Left cardiac atrium (tissue), 4 donors: ENCODE measurements at regions of chr15 and their contacts with region 1.

Region 1: GRCh38 chr15:92797168-92797951 is 102.8 kb upstream of the CHD2 start:
- DNase-seq: no peak
- ATAC-seq: peak; percentile 46 to 78

Region 2: GRCh38 chr15:92586383-92586942 is 210.9 kb before region 1 on chr15:
- intact Hi-C with region 1: no loop called
- DNase-seq: no peak
- ATAC-seq: no peak

Region 3: DNA sequence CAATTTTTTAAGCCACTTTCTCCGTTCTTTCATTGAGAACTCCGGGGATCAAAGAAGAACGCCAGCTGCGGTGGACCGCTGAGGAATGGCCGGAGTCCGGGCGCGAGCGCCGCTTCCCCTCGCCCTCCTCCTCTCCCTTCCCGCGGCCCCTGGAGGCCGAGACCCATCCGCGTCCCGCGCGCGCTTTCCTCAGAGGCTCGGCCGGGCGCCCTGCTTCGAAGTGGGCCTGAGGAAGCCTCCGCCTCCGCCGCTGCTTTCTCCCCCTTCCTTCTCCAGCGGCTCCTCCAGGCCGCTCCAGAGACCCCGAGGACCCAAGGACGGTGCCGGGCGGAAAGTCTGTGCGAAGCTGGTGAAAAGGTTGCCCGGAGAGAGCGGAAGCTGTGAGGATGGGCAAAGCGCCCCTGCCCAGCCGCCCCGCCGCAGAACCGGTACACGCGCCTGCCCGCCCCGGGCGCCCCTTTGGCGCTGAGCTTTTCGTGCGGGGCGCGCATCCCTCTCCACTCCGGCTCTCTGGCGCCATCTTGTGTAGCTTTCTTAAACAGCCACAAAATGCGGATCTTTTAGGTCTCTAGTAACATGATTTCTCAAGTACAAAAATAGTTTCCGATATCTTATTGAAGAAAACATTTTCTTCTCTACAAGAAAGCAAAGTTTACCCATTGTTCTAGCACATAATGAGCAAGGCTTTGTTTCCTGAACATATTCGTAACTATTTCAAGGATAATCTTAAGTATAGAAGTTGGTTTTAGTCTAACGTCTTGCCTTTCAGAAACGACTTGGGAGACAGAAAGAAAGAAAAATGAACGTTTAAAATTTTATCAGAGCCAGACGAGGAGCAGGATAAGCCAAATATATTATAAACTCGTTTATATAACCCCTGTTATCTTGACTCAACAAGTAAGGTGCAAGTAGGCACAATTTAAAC is 82.6 kb before region 1 on chr15:
- intact Hi-C with region 1: no loop called
- DNase-seq: peak; percentile 80
- ATAC-seq: peak; percentile 94

Region 4: DNA sequence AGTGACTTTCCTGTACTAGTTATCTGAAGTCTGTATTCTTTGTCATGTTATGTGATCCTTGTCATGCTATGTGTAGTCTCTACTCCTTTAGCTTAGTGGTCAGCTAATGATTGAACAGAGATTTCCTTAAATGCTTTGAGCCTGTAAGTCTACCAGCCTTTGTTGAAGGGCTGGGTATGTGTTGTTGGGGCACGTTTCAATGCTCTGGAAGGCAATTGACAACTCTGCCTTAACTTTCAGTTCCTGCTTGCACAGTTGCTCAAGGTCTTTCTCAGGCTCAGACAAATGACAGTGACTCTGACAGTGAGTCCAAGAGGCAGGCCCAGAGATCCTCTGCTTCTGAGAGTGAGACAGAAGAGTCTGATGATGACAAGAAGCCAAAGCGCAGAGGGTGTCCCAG is 192.1 kb after region 1 on chr15:
- intact Hi-C with region 1: loop called in 1 of 2 experiments (anchors 10 kb)
- DNase-seq: no peak
- ATAC-seq: no peak

Region 5: DNA sequence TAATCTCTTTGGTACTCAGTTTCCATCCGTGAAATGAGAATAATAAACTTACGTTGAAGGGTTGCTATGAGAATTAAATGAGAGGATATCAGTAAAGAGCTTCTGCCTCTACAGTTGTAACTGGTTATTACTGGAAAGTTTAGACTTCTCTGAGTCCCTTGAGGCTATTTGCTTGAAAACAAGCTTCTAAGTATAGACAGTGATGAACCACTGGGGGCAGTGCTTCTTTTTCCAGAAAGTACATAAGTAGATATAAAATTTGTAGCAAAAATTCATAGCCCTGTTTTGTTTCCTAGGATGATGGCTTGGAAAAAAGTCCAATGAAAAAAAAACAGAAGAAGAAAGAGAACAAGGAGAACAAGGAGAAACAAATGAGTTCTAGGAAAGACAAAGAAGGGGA is 204.5 kb after region 1 on chr15:
- intact Hi-C with region 1: loop called in 1 of 2 experiments (anchors 10 kb)
- DNase-seq: no peak
- ATAC-seq: no peak

Region 6: GRCh38 chr15:94119923-94120775 is 1322.8 kb after region 1 on chr15:
- intact Hi-C with region 1: loop called in 1 of 2 experiments (anchors 10 kb)
- DNase-seq: peak; percentile 40
- ATAC-seq: peak; percentile 95